Stomach (tissue), 19 donors: ENCODE measurements at regions of chr6 and their contacts with region 1.

Region 1: GRCh38 chr6:158060455-158061360 is 79.0 kb downstream of the SYNJ2 start:
- DNase-seq: peak; percentile 72 to 93
- H3K4me3 ChIP-seq: peak overlapping the region in 1 of 4 donors; percentile 9
- H3K27ac ChIP-seq: peak overlapping the region; percentile 38 to 89 (median 78)
- H3K4me1 ChIP-seq: peaks cover 17 to 38% (median 22%) of the 10 kb centered on the region in 4 donors
- H3K27me3 ChIP-seq: no peaks in the 10 kb centered on the region
- CTCF ChIP-seq: no peak
- EP300 ChIP-seq: no peak
- POLR2A ChIP-seq: no peak

Region 2: DNA sequence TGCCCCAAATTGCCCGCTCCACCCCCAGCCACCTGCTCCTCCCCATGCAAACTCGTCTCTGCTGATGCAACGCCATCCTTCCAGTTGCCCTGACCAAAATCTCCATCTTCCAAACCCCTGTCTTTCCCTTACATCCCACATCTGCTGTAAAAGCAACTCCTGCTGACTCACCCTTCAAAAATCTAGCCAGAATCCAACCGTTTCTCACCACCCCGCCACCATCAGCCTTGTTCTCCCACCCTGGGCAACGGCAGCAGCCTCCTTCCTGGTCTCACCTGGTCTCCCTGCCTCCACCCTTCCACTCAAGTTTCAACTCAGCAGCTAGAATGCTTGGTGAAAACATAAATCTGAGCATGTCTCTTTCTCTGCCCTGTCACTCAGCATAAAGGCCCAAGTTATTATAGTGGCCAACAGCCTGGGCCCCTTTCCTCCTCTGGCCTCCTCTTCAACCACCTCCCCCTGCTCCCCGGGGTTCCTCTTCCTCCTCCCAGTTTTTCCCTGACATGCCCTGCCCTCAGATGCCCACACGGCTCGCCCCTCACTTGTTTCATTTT is 86.3 kb before region 1 on chr6:
- intact Hi-C with region 1: loop called (anchors 10 kb)
- DNase-seq: no peak
- H3K4me3 ChIP-seq: no peak overlapping the region
- H3K27ac ChIP-seq: peak overlapping the region in 1 of 5 donors; percentile 38
- H3K4me1 ChIP-seq: peaks cover 0 to 11% (median under 1%) of the 10 kb centered on the region in 4 donors
- H3K27me3 ChIP-seq: no peaks in the 10 kb centered on the region
- CTCF ChIP-seq: no peak
- EP300 ChIP-seq: no peak
- POLR2A ChIP-seq: no peak

Region 3: GRCh38 chr6:158109744-158110143 is 49.0 kb after region 1 on chr6:
- intact Hi-C with region 1: no loop called
- DNase-seq: no peak
- H3K4me3 ChIP-seq: no peak overlapping the region
- H3K27ac ChIP-seq: no peak overlapping the region
- H3K4me1 ChIP-seq: no peaks in the 10 kb centered on the region
- H3K27me3 ChIP-seq: no peaks in the 10 kb centered on the region
- CTCF ChIP-seq: no peak
- EP300 ChIP-seq: no peak
- POLR2A ChIP-seq: no peak